SK-N-SH (cell line): ENCODE measurements at regions of chr5 and their contacts with region 1.

Region 1: GRCh38 chr5:79020861-79021561 is 35.9 kb upstream of the ARSB start:
- DNase-seq: peak; percentile 33
- H3K4me3 ChIP-seq: peak overlapping the region; percentile 29 to 38; a peak in 3 of 4 replicates
- H3K27ac ChIP-seq: peak overlapping the region in 1 of 2 experiments; percentile 60; a peak in 3 of 4 replicates
- H3K4me1 ChIP-seq: peaks cover 0 to 11% of the 10 kb centered on the region in 2 experiments; a peak in 3 of 4 replicates
- H3K27me3 ChIP-seq: no peaks in the 10 kb centered on the region
- CTCF ChIP-seq: peak; percentile 91
- EP300 ChIP-seq: peak in 1 of 2 experiments; percentile 22; a peak in 1 of 4 replicates
- RAD21 ChIP-seq: peak; percentile 88

Region 2: GRCh38 chr5:78677777-78678668 is 343.0 kb before region 1 on chr5:
- CTCF ChIA-PET with region 1: no interaction called
- POLR2A ChIA-PET with region 1: no interaction called
- DNase-seq: peak; percentile 60
- H3K4me3 ChIP-seq: no peak overlapping the region
- H3K27ac ChIP-seq: peak overlapping the region; percentile 88 to 94
- H3K4me1 ChIP-seq: peaks cover 12 to 13% of the 10 kb centered on the region in 2 experiments
- H3K27me3 ChIP-seq: no peaks in the 10 kb centered on the region
- CTCF ChIP-seq: no peak; the same call in 1 of the 2 replicates
- EP300 ChIP-seq: peak; percentile 47 to 71; a peak in 3 of 4 replicates
- RAD21 ChIP-seq: peak; percentile 30; the same call in 1 of the 2 replicates

Region 3: GRCh38 chr5:78841767-78842166 is 179.2 kb before region 1 on chr5:
- CTCF ChIA-PET with region 1: no interaction called
- POLR2A ChIA-PET with region 1: no interaction called
- DNase-seq: no peak
- H3K4me3 ChIP-seq: no peak overlapping the region
- H3K27ac ChIP-seq: no peak overlapping the region
- H3K4me1 ChIP-seq: peaks cover 0 to 4% of the 10 kb centered on the region in 2 experiments; a peak in 1 of 4 replicates
- H3K27me3 ChIP-seq: no peaks in the 10 kb centered on the region
- CTCF ChIP-seq: no peak
- EP300 ChIP-seq: no peak
- RAD21 ChIP-seq: no peak

Region 4: DNA sequence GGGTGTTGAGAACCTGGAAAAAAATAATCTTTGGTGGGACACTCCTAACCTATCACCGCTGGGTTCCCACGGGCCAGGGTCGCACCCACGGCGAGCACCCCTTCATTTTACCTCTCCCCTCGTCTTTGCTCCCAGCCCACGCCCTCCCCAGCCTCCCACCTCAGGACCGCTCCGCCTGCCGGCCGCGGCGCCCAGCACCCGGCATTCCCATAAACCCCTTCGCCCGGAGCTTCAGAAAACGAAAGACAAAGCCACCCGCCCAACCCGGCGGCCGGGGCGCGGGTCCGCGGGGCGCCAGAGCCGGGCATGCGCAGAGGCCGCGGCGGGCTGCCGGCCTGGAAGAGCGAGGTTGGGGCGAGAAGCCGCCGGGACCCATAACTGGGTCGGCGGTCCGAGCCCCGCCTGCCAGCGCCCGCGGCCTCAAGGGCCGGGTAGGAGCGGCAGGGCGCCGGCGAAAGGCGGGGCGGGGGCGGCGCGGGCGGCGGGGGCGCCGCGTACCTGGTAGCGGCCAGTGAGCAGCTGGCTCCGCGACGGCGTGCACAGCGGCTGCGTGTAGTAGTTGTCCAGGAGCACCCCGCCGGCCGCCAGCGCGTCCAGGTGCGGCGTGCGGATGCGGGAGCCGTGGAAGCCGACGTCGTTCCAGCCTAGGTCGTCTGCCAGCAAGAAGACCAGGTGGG is 36.4 kb before region 1 on chr5:
- CTCF ChIA-PET with region 1: interaction called, 68 read pairs
- POLR2A ChIA-PET with region 1: no interaction called
- DNase-seq: peak; percentile 97
- H3K4me3 ChIP-seq: peak overlapping the region; percentile 73 to 85
- H3K27ac ChIP-seq: peak overlapping the region; percentile 84 to 97
- H3K4me1 ChIP-seq: peaks cover 4 to 16% of the 10 kb centered on the region in 2 experiments; a peak in 2 of 4 replicates
- H3K27me3 ChIP-seq: no peaks in the 10 kb centered on the region
- CTCF ChIP-seq: peak; percentile 37
- EP300 ChIP-seq: 0 out of 4 replicates have a peak, but pooled peaks of 1 of the 2 experiments have one; percentile 8
- RAD21 ChIP-seq: peak; percentile 13; the same call in 1 of the 2 replicates

Region 5: GRCh38 chr5:79069488-79070349 is 48.7 kb after region 1 on chr5 and contains the starts of genes BHMT2 and DMGDH:
- CTCF ChIA-PET with region 1: interaction called, 16 read pairs
- POLR2A ChIA-PET with region 1: no interaction called
- DNase-seq: peak; percentile 20
- H3K4me3 ChIP-seq: no peak within 1 kb of the TSS
- H3K27ac ChIP-seq: peak within 1 kb of the TSS in 1 of 2 experiments; percentile 47; a peak in 2 of 4 replicates
- H3K4me1 ChIP-seq: peaks cover 0 to 10% of the 10 kb centered on the region in 2 experiments; a peak in 2 of 4 replicates
- H3K27me3 ChIP-seq: no peaks in the 10 kb centered on the region
- CTCF ChIP-seq: no peak
- EP300 ChIP-seq: no peak
- RAD21 ChIP-seq: no peak
- polyA plus RNA-seq, gene BHMT2: not detected in 2 replicates
- polyA plus RNA-seq, gene DMGDH: 0.56 and 0.70 TPM in 2 replicates

Region 6: DNA sequence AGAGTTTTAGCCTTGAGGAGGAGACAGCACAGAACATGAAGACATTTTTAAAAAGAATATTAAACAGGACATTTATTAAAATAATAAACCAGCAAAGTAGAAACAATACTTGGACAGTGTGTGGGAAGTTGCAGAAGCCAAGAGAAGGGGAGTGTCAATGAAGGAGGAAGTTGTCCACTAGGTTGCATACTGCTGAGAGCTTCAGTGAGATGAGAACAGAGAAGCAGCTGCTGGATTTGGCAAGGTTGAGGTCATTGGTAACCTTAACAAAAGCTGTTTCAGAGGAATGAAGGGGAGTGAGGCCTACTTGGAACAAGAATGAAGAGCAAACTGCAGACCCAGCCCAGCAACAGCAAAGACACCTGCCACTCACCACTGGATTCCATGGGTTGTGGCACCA is 102.0 kb after region 1 on chr5:
- CTCF ChIA-PET with region 1: interaction called, 42 read pairs
- POLR2A ChIA-PET with region 1: no interaction called
- DNase-seq: no peak
- H3K4me3 ChIP-seq: no peak overlapping the region
- H3K27ac ChIP-seq: no peak overlapping the region
- H3K4me1 ChIP-seq: no peaks in the 10 kb centered on the region
- H3K27me3 ChIP-seq: no peaks in the 10 kb centered on the region
- CTCF ChIP-seq: no peak
- EP300 ChIP-seq: no peak
- RAD21 ChIP-seq: no peak

Region 7: GRCh38 chr5:79157305-79157704 is 136.3 kb after region 1 on chr5:
- CTCF ChIA-PET with region 1: interaction called, 13 read pairs
- POLR2A ChIA-PET with region 1: no interaction called
- DNase-seq: no peak
- H3K4me3 ChIP-seq: no peak overlapping the region
- H3K27ac ChIP-seq: no peak overlapping the region
- H3K4me1 ChIP-seq: no peaks in the 10 kb centered on the region
- H3K27me3 ChIP-seq: no peaks in the 10 kb centered on the region
- CTCF ChIP-seq: no peak
- EP300 ChIP-seq: no peak
- RAD21 ChIP-seq: no peak

Region 8: DNA sequence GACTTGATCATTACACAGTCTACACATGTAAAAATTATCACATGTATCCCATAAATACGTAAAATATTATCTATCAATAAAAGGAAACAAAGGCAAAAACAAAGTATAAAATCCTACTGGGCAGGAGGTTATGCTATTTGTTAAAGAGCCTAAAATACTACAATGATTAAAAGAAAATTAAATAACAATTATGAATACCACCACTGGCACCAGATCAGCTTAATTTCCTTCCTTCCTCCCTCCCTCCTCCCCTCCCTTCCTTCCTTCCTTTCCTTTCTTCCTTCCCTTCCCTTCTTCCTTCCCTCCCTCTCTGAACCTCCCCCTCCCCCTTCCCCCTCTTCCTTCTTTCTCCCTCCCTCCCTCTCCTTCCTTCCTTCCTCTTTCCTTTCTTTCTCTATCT is 365.7 kb after region 1 on chr5:
- CTCF ChIA-PET with region 1: no interaction called
- POLR2A ChIA-PET with region 1: no interaction called
- DNase-seq: no peak
- H3K4me3 ChIP-seq: no peak overlapping the region
- H3K27ac ChIP-seq: no peak overlapping the region
- H3K4me1 ChIP-seq: no peaks in the 10 kb centered on the region
- H3K27me3 ChIP-seq: no peaks in the 10 kb centered on the region
- CTCF ChIP-seq: no peak
- EP300 ChIP-seq: no peak
- RAD21 ChIP-seq: no peak

Region 9: DNA sequence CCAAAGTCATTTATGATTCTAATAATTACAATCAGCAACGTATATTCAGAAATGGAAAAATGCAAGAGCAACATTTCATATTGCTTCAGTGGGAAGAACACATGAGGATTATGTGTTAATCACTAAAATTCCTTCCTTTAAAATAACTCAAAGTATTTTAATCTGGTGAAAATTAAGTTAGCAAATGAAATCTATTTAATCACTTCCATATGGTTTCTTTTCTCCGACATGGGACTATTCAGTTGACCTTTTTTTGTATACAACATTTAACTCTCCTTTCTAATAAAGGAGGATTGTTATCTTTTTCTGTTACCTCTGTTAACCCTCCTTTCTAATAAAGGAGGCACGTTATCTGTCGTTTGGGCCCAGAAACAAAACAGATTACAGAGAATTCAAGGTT is 433.0 kb after region 1 on chr5:
- CTCF ChIA-PET with region 1: interaction called, 219 read pairs
- POLR2A ChIA-PET with region 1: no interaction called
- DNase-seq: peak; percentile 6
- H3K4me3 ChIP-seq: no peak overlapping the region
- H3K27ac ChIP-seq: no peak overlapping the region
- H3K4me1 ChIP-seq: peaks cover 4 to 9% of the 10 kb centered on the region in 2 experiments; a peak in 3 of 4 replicates
- H3K27me3 ChIP-seq: no peaks in the 10 kb centered on the region
- CTCF ChIP-seq: no peak
- EP300 ChIP-seq: no peak
- RAD21 ChIP-seq: no peak

Region 10: DNA sequence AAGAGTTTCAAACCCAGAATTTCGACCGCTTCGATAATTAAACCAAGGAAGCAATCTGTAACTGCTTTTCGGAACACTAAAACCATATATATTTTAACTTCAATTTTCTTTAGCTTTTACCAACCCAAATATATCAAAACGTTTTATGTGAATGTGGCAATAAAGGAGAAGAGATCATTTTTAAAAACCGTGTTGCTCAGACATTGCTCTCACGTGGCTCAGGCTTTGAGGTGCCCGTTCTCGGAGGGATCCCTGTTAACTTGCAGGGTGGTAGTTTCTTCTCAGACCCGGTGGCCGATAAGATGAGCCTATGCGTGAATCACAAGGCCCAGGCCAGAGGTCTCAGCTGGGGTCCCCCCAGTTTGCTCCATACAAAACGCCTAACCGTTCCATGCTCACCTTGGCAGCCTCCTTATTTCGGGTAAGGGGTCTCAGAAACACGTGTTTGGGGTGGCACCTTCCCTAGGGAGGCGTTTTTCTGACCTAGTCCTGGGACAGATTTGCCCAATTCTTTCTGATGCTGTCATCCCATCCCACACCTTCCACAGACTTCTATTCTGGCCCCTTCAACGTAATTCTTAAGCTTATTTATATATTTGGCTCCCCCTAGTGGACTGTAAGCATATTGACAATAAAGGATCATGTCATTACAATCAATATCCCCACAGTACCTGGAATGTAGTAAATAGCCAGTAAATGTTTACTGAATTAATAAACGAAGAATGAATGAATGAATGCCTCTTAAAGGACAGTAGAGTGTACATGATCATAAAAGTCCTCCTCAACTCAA is 1062.3 kb after region 1 on chr5:
- CTCF ChIA-PET with region 1: interaction called, 10 read pairs
- POLR2A ChIA-PET with region 1: no interaction called
- DNase-seq: peak; percentile 76
- H3K4me3 ChIP-seq: no peak overlapping the region
- H3K27ac ChIP-seq: no peak overlapping the region
- H3K4me1 ChIP-seq: no peaks in the 10 kb centered on the region; a peak in 1 of 4 replicates
- H3K27me3 ChIP-seq: no peaks in the 10 kb centered on the region
- CTCF ChIP-seq: peak; percentile 81
- EP300 ChIP-seq: no peak
- RAD21 ChIP-seq: peak; percentile 85